Lower leg skin (tissue), 4 donors: ENCODE measurements at regions of chr20 and their contacts with region 1.

Region 1: DNA sequence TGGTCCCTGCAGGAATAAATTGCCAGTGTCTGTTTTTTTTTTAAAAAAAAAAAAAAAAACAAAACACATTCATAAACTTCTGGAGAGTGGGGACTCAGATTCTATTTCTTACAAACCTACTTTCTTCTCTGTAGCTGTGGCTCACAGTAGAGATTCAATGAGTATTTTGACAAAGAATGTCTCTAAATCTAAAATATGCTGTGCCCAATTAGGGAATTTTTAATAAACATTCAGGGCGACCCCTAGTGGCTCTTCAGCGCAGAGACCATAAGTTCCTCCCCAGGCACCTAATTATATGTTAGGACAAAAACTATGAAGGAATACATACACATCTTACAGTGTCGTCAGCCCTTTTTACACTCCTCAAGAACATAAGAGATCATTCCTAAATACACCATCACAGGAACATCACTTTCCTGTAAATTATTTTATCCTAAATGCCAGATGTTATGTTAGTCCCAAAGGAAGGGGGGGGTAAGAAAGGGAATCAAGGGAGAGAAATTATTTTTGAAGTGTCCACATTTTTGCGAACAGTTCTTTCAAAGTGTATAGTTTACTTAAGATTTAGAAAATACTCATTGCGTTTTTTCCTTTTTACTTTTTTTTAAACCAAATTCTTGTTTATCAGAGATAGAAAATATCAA is 21.8 kb upstream of the NAA20 start:
- DNase-seq: no peak
- H3K4me3 ChIP-seq: no peak overlapping the region
- CTCF ChIP-seq: peak in 1 of 3 donors; percentile 53
- POLR2A ChIP-seq: no peak

Region 2: DNA sequence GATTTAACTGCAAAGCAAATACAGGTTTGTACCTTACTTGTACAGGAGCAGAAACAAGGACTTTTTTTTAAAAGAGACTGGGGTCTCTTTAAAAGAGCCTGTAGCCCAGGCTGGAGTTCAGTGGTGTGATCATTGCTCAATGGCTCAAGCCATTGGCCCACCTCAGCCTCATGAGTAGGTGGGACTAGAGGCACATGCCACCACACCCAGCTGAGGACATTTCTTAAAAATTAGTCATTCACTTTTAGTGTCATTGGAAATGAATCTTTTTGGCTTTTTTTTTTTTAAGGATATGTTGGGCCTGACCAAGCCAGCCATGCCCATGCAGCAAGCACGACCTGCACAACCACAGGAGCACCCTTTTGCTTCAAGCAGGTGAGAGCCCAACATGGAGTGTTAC is 1470.7 kb before region 1 on chr20:
- intact Hi-C with region 1: no loop called
- DNase-seq: no peak
- H3K4me3 ChIP-seq: no peak overlapping the region
- CTCF ChIP-seq: no peak
- POLR2A ChIP-seq: no peak

Region 3: GRCh38 chr20:19692685-19693119 is 302.6 kb before region 1 on chr20:
- intact Hi-C with region 1: loop called (anchors 5 kb)
- DNase-seq: peak; percentile 49 to 94
- H3K4me3 ChIP-seq: no peak overlapping the region
- CTCF ChIP-seq: peak in 1 of 3 donors; percentile 59
- POLR2A ChIP-seq: no peak

Region 4: DNA sequence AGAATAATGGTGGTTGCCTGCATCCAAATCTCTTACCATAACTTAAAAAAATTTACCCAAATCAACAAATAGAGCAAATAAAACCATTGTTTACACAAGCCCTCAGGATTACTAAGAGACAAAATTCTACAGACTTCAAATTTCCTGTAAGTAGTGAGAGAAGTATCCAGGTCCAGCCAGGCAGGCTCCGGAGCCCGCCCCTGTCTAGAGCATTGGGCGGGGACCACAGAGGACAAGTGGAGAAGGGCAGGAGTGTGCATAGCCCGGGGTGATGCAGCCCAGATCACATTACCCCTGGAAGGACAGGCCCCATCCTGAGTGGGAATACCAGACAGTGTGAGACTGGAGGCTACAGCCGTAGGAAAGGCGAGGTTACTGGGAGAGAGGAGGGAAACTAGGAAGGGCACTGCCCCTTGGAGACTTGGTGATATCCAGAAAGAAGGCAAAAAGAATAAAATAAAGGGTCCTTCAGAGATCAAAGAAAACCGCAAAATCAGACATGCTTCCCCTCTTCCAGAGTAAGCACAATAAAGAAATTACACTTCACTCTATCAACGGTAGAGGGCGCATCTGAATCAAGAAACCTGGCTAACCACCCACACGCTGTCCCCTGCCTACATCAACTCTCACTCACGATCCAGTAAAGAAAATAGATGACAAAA is 210.7 kb before region 1 on chr20:
- intact Hi-C with region 1: loop called (anchors 10 kb)
- DNase-seq: peak in 1 of 2 donors; percentile 60
- H3K4me3 ChIP-seq: no peak overlapping the region
- CTCF ChIP-seq: peak in 1 of 3 donors; percentile 85
- POLR2A ChIP-seq: no peak

Region 5: DNA sequence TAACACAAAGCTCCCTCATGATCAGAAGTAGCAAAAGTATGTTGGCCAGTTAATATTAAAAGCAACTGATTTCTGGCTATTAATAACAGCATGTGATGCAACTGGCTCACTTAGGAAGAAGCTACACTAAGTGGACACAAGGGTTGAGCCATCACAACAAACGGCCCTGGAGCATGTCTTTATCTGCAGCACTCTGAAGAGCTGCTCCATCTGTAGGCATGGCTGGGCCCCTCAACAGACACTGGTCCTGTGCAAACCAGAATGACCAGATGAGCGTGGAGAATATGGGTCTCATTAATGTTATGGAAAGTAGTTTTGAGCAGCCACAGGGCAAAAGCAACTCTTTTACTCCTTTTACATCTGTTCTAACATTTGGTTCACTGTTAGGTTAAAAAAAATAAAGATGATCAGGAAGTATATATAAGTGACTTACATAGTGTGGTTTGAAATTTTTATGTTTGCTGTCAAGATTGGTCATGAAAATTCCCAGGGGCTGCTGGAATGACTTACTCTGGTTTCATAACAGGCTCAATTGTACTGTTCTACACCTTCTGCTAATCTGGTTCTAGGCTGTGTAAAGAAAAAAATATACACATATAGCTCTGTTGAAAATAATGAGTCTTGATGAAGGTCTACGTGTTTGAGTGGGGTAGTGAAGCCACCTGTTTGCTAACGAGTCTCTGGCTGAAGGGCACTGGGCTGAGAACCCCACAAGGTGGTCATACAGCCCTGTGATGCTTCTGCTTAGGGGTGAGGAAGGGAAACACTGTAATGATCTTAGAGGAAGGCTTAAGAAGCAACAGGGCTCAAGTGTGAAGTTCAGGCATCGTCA is 430.7 kb after region 1 on chr20:
- intact Hi-C with region 1: no loop called
- DNase-seq: no peak
- H3K4me3 ChIP-seq: no peak overlapping the region
- CTCF ChIP-seq: no peak
- POLR2A ChIP-seq: no peak

Region 6: DNA sequence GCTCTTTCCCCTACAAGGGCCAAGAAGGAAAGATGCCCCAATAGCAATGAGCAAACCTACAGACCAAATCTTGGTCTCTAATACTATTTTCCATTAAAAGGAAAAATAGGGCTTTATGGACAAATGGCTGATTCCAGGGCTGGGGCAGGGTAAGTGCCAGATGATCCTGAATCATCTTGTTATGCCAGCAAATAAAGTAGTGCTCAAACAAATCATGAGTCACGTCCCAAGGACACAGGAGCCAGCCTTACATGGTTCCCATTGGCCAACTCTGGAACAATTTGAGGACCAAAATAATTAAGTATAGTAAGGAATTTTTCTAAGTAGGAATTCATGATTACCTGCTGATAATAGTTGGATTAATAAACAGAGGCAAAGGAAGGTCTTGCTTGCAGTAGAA is 1455.2 kb after region 1 on chr20:
- intact Hi-C with region 1: no loop called
- DNase-seq: no peak
- H3K4me3 ChIP-seq: no peak overlapping the region
- CTCF ChIP-seq: no peak
- POLR2A ChIP-seq: no peak